Activated CD4-positive, alpha-beta T cell treated with anti-CD3 and anti-CD28 coated beads for 36 hours (primary cell): ENCODE measurements at regions of chr15 and their contacts with region 1.

Region 1: DNA sequence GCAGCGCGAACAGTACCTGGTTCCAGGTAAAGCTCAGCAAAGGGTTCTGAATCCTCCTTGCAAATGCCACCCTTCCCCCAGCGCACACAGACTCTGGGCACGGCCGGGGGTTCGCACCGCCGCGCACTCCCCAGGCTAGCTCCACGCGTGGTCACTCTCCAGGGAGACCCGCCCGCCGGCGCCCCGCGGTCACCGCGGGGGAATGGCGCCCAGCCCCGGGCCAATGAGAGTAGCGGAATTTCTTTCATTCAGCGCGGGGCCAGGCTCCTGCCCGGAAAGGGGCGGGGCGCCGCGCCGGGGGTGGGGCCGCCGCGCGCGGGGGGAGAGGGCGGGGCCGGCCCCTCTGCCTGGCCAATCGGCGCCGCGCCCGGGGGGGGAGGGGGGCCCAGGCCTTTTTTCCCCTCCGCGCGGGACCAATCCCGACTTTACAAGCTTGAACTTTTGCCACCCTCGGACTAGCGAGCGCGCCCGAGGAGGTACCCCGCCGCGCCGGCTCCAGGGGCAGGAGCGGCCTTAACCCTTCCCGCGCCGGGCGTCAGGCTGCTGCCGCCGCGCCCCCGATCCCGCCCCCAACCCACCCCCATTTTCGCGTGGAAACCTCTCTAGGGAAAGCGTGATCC is 1.1 kb upstream of the SMAD6 start:
- DNase-seq: peak; percentile 93
- ATAC-seq: peak; percentile 86
- H3K4me3 Mint-ChIP-seq: peak overlapping the region; percentile 78
- H3K27ac Mint-ChIP-seq: peak overlapping the region; percentile 40
- H3K4me1 Mint-ChIP-seq: peaks cover 14% of the 10 kb centered on the region
- H3K27me3 Mint-ChIP-seq: peaks cover 16% of the 10 kb centered on the region

Region 2: GRCh38 chr15:66278056-66278455 is 422.9 kb before region 1 on chr15:
- CTCF ChIA-PET with region 1: no interaction called
- POLR2A ChIA-PET with region 1: no interaction called
- intact Hi-C with region 1: no loop called
- DNase-seq: no peak
- ATAC-seq: no peak
- H3K4me3 Mint-ChIP-seq: no peak overlapping the region
- H3K27ac Mint-ChIP-seq: no peak overlapping the region
- H3K4me1 Mint-ChIP-seq: no peaks in the 10 kb centered on the region
- H3K27me3 Mint-ChIP-seq: no peaks in the 10 kb centered on the region

Region 3: DNA sequence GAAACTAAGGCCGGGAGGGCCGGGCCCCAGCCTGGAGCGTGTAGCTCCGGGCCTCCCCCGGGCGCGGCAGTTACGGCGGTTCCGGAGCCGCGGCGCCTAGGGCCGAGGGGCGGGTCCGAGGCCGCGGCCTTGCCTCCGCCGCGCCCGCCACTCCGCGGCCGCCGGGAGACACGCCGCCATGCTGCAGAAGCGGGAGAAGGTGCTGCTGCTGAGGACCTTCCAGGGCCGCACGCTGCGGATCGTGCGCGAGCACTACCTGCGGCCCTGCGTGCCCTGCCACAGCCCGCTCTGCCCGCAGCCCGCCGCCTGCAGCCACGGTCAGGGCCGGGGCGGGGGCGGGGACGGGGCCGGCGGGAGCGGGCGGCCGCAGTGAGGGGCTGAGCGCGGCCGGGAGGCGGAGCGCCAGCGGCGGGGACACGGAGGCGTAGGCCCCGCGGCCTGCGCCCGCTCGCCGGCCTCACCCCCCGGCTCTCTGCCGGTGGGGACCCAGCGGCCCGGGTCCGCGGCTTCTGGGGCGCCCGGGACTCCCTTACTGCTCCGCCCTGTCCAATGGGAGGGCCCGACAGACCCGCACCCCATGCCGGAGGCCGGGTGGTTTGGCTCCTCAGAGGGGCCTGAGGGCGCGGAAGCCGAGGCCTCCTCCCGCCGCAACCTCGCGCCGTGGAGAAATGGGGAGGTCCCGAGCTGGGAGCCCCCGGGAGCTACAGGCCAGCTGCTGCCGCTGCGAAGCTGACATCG is 407.3 kb before region 1 on chr15 and contains the start of gene DIS3L:
- CTCF ChIA-PET with region 1: no interaction called
- POLR2A ChIA-PET with region 1: no interaction called
- intact Hi-C with region 1: loop called in 1 of 2 experiments (anchors 1 kb)
- DNase-seq: peak; percentile 75
- ATAC-seq: peak; percentile 80
- H3K4me3 Mint-ChIP-seq: peak within 1 kb of the TSS; percentile 86
- H3K27ac Mint-ChIP-seq: peak within 1 kb of the TSS; percentile 90
- H3K4me1 Mint-ChIP-seq: peaks cover 49% of the 10 kb centered on the region
- H3K27me3 Mint-ChIP-seq: no peaks in the 10 kb centered on the region
- total RNA-seq, gene DIS3L: 24.6 to 25.9 TPM

Region 4: GRCh38 chr15:66504563-66505429 is 196.1 kb before region 1 on chr15 and contains the starts of genes RPL4 and ZWILCH:
- CTCF ChIA-PET with region 1: no interaction called
- POLR2A ChIA-PET with region 1: no interaction called
- intact Hi-C with region 1: loop called in 1 of 2 experiments (anchors 1 kb)
- DNase-seq: peak; percentile 85
- ATAC-seq: peak; percentile 89
- H3K4me3 Mint-ChIP-seq: peak within 1 kb of the TSS; percentile 88
- H3K27ac Mint-ChIP-seq: peak within 1 kb of the TSS; percentile 98
- H3K4me1 Mint-ChIP-seq: peaks cover 56% of the 10 kb centered on the region
- H3K27me3 Mint-ChIP-seq: no peaks in the 10 kb centered on the region
- total RNA-seq, gene RPL4: 4,227 to 4,959 TPM
- total RNA-seq, gene ZWILCH: 27.4 to 31.1 TPM

Region 5: GRCh38 chr15:66673410-66674322 is 27.2 kb before region 1 on chr15:
- CTCF ChIA-PET with region 1: no interaction called
- POLR2A ChIA-PET with region 1: no interaction called
- intact Hi-C with region 1: no loop called
- DNase-seq: peak; percentile 77
- ATAC-seq: peak; percentile 92
- H3K4me3 Mint-ChIP-seq: no peak overlapping the region
- H3K27ac Mint-ChIP-seq: no peak overlapping the region
- H3K4me1 Mint-ChIP-seq: peaks cover 16% of the 10 kb centered on the region
- H3K27me3 Mint-ChIP-seq: peaks cover 2% of the 10 kb centered on the region

Region 6: GRCh38 chr15:66770518-66771350 is 69.8 kb after region 1 on chr15:
- CTCF ChIA-PET with region 1: no interaction called
- POLR2A ChIA-PET with region 1: no interaction called
- intact Hi-C with region 1: no loop called
- DNase-seq: no peak
- ATAC-seq: no peak
- H3K4me3 Mint-ChIP-seq: no peak overlapping the region
- H3K27ac Mint-ChIP-seq: no peak overlapping the region
- H3K4me1 Mint-ChIP-seq: no peaks in the 10 kb centered on the region
- H3K27me3 Mint-ChIP-seq: peaks cover 6% of the 10 kb centered on the region

Region 7: GRCh38 chr15:66851226-66852071 is 150.5 kb after region 1 on chr15:
- CTCF ChIA-PET with region 1: interaction called, 4 read pairs
- POLR2A ChIA-PET with region 1: no interaction called
- intact Hi-C with region 1: loop called (anchors 5 kb)
- DNase-seq: peak; percentile 90
- ATAC-seq: peak; percentile 100
- H3K4me3 Mint-ChIP-seq: no peak overlapping the region
- H3K27ac Mint-ChIP-seq: peak overlapping the region; percentile 58
- H3K4me1 Mint-ChIP-seq: peaks cover 6% of the 10 kb centered on the region
- H3K27me3 Mint-ChIP-seq: peaks cover 15% of the 10 kb centered on the region

Region 8: GRCh38 chr15:67542420-67543347 is 841.8 kb after region 1 on chr15 and contains the start of gene MAP2K5:
- CTCF ChIA-PET with region 1: no interaction called
- POLR2A ChIA-PET with region 1: no interaction called
- intact Hi-C with region 1: loop called in 1 of 2 experiments (anchors 10 kb)
- DNase-seq: peak; percentile 90
- ATAC-seq: peak; percentile 70
- H3K4me3 Mint-ChIP-seq: peak within 1 kb of the TSS; percentile 82
- H3K27ac Mint-ChIP-seq: peak within 1 kb of the TSS; percentile 95
- H3K4me1 Mint-ChIP-seq: peaks cover 43% of the 10 kb centered on the region
- H3K27me3 Mint-ChIP-seq: no peaks in the 10 kb centered on the region
- total RNA-seq, gene MAP2K5: 18.0 to 26.7 TPM

Region 9: GRCh38 chr15:67559158-67559557 is 858.2 kb after region 1 on chr15:
- CTCF ChIA-PET with region 1: no interaction called
- POLR2A ChIA-PET with region 1: no interaction called
- intact Hi-C with region 1: no loop called
- DNase-seq: no peak
- ATAC-seq: no peak
- H3K4me3 Mint-ChIP-seq: no peak overlapping the region
- H3K27ac Mint-ChIP-seq: no peak overlapping the region
- H3K4me1 Mint-ChIP-seq: peaks cover 10% of the 10 kb centered on the region
- H3K27me3 Mint-ChIP-seq: no peaks in the 10 kb centered on the region